A549 (cell line): ENCODE measurements at regions of chr5 and their contacts with region 1.

Region 1: GRCh38 chr5:34957857-34958690 is 28.7 kb downstream of the DNAJC21 start:
- DNase-seq: peak; percentile 28 to 43
- ATAC-seq: peak; percentile 92 to 93
- H3K4me3 ChIP-seq: no peak overlapping the region
- H3K27ac ChIP-seq: no peak overlapping the region
- H3K4me1 ChIP-seq: no peaks in the 10 kb centered on the region
- CTCF ChIP-seq: peak; percentile 57
- EP300 ChIP-seq: no peak
- POLR2A ChIP-seq: no peak
- RAD21 ChIP-seq: peak; percentile 39 to 44; a peak in 4 of 5 replicates

Region 2: DNA sequence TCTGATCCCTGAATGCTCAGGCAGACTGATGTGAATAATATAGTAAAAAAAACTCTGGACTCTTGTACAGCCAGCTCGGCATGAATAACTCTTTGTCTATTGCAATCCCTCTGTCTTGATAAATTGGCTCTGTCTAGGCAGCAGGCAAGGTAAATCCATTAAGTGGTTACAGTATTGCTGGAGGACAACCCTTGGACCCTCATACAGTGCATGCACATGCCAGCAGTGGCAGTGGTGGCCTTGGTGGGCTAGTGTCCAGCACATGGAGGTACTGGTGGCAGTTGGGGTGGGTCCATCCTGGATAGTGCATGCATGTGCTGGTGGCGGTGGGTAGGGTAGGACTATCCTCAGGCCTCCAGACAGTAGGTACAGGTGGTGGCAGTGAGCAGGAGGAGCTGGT is 10.2 kb after region 1 on chr5:
- CTCF ChIA-PET with region 1: interaction called, 11 read pairs
- POLR2A ChIA-PET with region 1: no interaction called
- DNase-seq: no peak
- ATAC-seq: no peak
- H3K4me3 ChIP-seq: no peak overlapping the region
- H3K27ac ChIP-seq: no peak overlapping the region
- H3K4me1 ChIP-seq: no peaks in the 10 kb centered on the region
- CTCF ChIP-seq: no peak
- EP300 ChIP-seq: no peak
- POLR2A ChIP-seq: no peak
- RAD21 ChIP-seq: no peak

Region 3: GRCh38 chr5:35009657-35010056 is 51.6 kb after region 1 on chr5:
- CTCF ChIA-PET with region 1: no interaction called
- POLR2A ChIA-PET with region 1: no interaction called
- DNase-seq: no peak
- ATAC-seq: no peak
- H3K4me3 ChIP-seq: no peak overlapping the region
- H3K27ac ChIP-seq: no peak overlapping the region
- H3K4me1 ChIP-seq: no peaks in the 10 kb centered on the region
- CTCF ChIP-seq: no peak
- EP300 ChIP-seq: no peak
- POLR2A ChIP-seq: no peak
- RAD21 ChIP-seq: no peak